H1 (cell line): ENCODE measurements at regions of chr1 and their contacts with region 1.

Region 1: GRCh38 chr1:181497870-181498269 is 14.6 kb downstream of the CACNA1E start:
- DNase-seq: no peak
- H3K4me3 ChIP-seq: no peak overlapping the region
- H3K27ac ChIP-seq: no peak overlapping the region
- H3K4me1 ChIP-seq: no peaks in the 10 kb centered on the region; a peak in 1 of 7 replicates
- H3K27me3 ChIP-seq: peaks cover 0 to 1% (median 0%) of the 10 kb centered on the region in 4 experiments; a peak in 1 of 7 replicates
- CTCF ChIP-seq: no peak; a peak in 1 of 4 replicates
- EP300 ChIP-seq: no peak
- POLR2A ChIP-seq: no peak
- RAD21 ChIP-seq: peak in 1 of 2 experiments; percentile 12; a peak in 1 of 4 replicates

Region 2: DNA sequence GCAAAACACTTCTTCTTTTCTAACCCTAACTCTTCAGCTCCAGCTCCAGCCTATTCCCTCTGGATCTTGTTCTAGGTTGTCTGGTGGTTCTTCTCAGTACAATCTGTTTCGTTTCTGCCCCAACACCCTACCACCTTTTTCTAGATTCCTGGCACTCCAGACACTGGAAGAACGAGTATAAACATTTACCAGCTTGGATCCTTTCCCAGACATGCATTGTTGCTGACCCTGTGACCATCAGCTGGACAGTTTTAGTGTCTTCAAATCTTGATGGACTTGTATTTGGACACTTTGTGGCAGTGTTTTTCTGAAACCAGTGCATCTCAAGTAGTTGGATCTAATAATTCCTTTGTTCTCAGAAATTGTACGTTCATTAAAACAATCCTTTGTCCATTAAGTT is 45.1 kb before region 1 on chr1:
- CTCF ChIA-PET with region 1: no interaction called
- POLR2A ChIA-PET with region 1: no interaction called
- DNase-seq: no peak
- H3K4me3 ChIP-seq: no peak overlapping the region
- H3K27ac ChIP-seq: no peak overlapping the region
- H3K4me1 ChIP-seq: no peaks in the 10 kb centered on the region
- H3K27me3 ChIP-seq: peaks cover 0 to 2% (median 0%) of the 10 kb centered on the region in 4 experiments; a peak in 2 of 7 replicates
- CTCF ChIP-seq: no peak
- EP300 ChIP-seq: no peak
- POLR2A ChIP-seq: no peak
- RAD21 ChIP-seq: no peak

Region 3: GRCh38 chr1:181469829-181470228 is 28.0 kb before region 1 on chr1:
- CTCF ChIA-PET with region 1: no interaction called
- POLR2A ChIA-PET with region 1: no interaction called
- DNase-seq: no peak
- H3K4me3 ChIP-seq: no peak overlapping the region
- H3K27ac ChIP-seq: no peak overlapping the region
- H3K4me1 ChIP-seq: no peaks in the 10 kb centered on the region
- H3K27me3 ChIP-seq: no peaks in the 10 kb centered on the region; a peak in 1 of 7 replicates
- CTCF ChIP-seq: no peak
- EP300 ChIP-seq: no peak
- POLR2A ChIP-seq: no peak
- RAD21 ChIP-seq: no peak

Region 4: GRCh38 chr1:181485287-181486097 is 12.4 kb before region 1 on chr1:
- CTCF ChIA-PET with region 1: interaction called, 32 read pairs
- POLR2A ChIA-PET with region 1: interaction called, 3 read pairs
- DNase-seq: peak in 1 of 2 experiments; percentile 83
- H3K4me3 ChIP-seq: peak overlapping the region; percentile 20 to 56 (median 27); a peak in 7 of 8 replicates
- H3K27ac ChIP-seq: no peak overlapping the region
- H3K4me1 ChIP-seq: peaks cover 0 to 25% (median 10%) of the 10 kb centered on the region in 4 experiments; a peak in 5 of 7 replicates
- H3K27me3 ChIP-seq: peaks cover 32 to 71% (median 58%) of the 10 kb centered on the region in 4 experiments
- CTCF ChIP-seq: 0 out of 4 replicates have a peak, but pooled peaks of 1 of the 3 experiments have one; percentile 20
- EP300 ChIP-seq: 0 out of 3 replicates have a peak, but pooled peaks of 1 of the 2 experiments have one; percentile 10
- POLR2A ChIP-seq: no peak
- RAD21 ChIP-seq: peak; percentile 33 to 43; a peak in 2 of 4 replicates

Region 5: DNA sequence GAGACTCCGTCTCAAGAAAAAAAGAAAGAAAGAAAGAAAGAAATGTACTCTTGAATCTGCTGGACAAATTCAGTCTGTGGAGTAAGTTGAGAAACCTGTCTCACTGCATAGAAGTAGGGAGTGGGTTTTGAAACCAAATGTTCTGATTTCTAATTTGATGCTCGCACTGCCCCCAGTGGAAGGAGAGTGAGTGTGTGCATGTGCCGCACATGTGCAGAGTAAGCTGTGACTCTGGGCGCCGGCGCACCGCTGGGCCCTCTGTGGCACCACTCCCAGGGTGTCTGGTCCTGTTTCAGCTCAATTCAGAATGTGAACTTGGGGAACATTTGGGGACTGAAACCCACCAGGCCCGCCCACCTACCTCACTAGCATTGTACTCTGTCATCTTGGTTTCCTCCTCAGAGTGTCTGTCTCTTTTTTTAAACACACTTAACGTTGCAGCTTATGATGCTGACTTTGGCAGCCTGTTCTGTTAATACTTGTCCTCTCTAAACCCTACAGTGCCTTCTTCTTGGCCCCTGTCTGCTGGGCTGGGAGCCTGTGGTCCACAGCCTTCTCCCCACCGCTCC is 90.1 kb after region 1 on chr1:
- CTCF ChIA-PET with region 1: interaction called, 12 read pairs
- POLR2A ChIA-PET with region 1: no interaction called
- DNase-seq: peak in 1 of 2 experiments; percentile 49
- H3K4me3 ChIP-seq: no peak overlapping the region
- H3K27ac ChIP-seq: no peak overlapping the region
- H3K4me1 ChIP-seq: peaks cover 7 to 24% (median 14%) of the 10 kb centered on the region in 4 experiments; a peak in 6 of 7 replicates
- H3K27me3 ChIP-seq: no peaks in the 10 kb centered on the region
- CTCF ChIP-seq: peak; percentile 32 to 56 (median 47)
- EP300 ChIP-seq: no peak
- POLR2A ChIP-seq: no peak
- RAD21 ChIP-seq: peak; percentile 11 to 30; a peak in 2 of 4 replicates